ENCODE measurements at regions of chr6 and their contacts with region 1.

Region 1: GRCh38 chr6:131683479-131683878 is 17.7 kb downstream of the OR2A4 start:
- DNase-seq: no peak
- H3K4me3 ChIP-seq: no peak overlapping the region
- H3K27ac ChIP-seq: no peak overlapping the region
- H3K4me1 ChIP-seq: no peaks in the 10 kb centered on the region
- H3K27me3 ChIP-seq: no peaks in the 10 kb centered on the region
- CTCF ChIP-seq: no peak

Region 2: DNA sequence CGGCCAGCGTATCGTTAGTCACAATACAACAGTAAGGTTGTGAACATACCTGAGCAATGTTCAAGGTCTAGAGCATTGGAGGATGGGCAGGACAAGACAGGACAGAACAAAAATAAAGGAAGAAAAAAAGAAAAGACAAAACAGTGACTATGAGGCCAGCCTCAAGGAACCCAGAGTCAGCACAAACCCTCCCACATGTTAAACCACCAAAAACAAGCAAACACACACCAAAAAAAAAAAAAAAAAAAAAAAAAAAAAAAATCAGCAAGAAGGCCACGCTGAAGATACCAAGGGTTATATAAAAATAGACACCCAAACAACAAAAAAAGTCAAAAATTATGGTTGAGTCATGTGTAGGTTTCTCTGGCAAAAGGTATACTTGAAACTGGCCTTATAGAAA is 68.2 kb before region 1 on chr6:
- intact Hi-C with region 1: no loop called
- DNase-seq: no peak
- H3K4me3 ChIP-seq: no peak overlapping the region
- H3K27ac ChIP-seq: no peak overlapping the region
- H3K4me1 ChIP-seq: no peaks in the 10 kb centered on the region
- H3K27me3 ChIP-seq: no peaks in the 10 kb centered on the region
- CTCF ChIP-seq: no peak

Region 3: GRCh38 chr6:131894735-131895424 is 211.4 kb after region 1 on chr6:
- intact Hi-C with region 1: loop called (anchors 10 kb)
- DNase-seq: no peak
- H3K4me3 ChIP-seq: no peak overlapping the region
- H3K27ac ChIP-seq: no peak overlapping the region
- H3K4me1 ChIP-seq: no peaks in the 10 kb centered on the region
- H3K27me3 ChIP-seq: peaks cover 15% of the 10 kb centered on the region
- CTCF ChIP-seq: no peak